Heart left ventricle (tissue), 16 donors: ENCODE measurements at regions of chr3 and their contacts with region 1.

Region 1: GRCh38 chr3:9439331-9439730 is 41.9 kb downstream of the SETD5 start:
- DNase-seq: no peak
- ATAC-seq: peak in 2 of 4 donors; percentile 48 to 54
- H3K4me3 ChIP-seq: no peak overlapping the region
- H3K27ac ChIP-seq: no peak overlapping the region
- H3K4me1 ChIP-seq: peaks cover 0 to 20% (median 1%) of the 10 kb centered on the region in 12 donors
- H3K27me3 ChIP-seq: no peaks in the 10 kb centered on the region
- CTCF ChIP-seq: no peak
- POLR2A ChIP-seq: no peak

Region 2: GRCh38 chr3:9373465-9373864 is 65.9 kb before region 1 on chr3:
- intact Hi-C with region 1: loop called in 1 of 10 experiments (anchors 5 kb)
- DNase-seq: no peak
- ATAC-seq: no peak
- H3K4me3 ChIP-seq: no peak overlapping the region
- H3K27ac ChIP-seq: no peak overlapping the region
- H3K4me1 ChIP-seq: peaks cover 0 to 5% (median 0%) of the 10 kb centered on the region in 12 donors
- H3K27me3 ChIP-seq: no peaks in the 10 kb centered on the region
- CTCF ChIP-seq: no peak
- POLR2A ChIP-seq: no peak

Region 3: GRCh38 chr3:9387322-9387655 is 52.0 kb before region 1 on chr3:
- intact Hi-C with region 1: loop called in 3 of 10 experiments (anchors 5 kb)
- DNase-seq: no peak
- ATAC-seq: no peak
- H3K4me3 ChIP-seq: no peak overlapping the region
- H3K27ac ChIP-seq: no peak overlapping the region
- H3K4me1 ChIP-seq: peaks cover 0 to 22% (median 11%) of the 10 kb centered on the region in 12 donors
- H3K27me3 ChIP-seq: no peaks in the 10 kb centered on the region
- CTCF ChIP-seq: no peak
- POLR2A ChIP-seq: no peak

Region 4: DNA sequence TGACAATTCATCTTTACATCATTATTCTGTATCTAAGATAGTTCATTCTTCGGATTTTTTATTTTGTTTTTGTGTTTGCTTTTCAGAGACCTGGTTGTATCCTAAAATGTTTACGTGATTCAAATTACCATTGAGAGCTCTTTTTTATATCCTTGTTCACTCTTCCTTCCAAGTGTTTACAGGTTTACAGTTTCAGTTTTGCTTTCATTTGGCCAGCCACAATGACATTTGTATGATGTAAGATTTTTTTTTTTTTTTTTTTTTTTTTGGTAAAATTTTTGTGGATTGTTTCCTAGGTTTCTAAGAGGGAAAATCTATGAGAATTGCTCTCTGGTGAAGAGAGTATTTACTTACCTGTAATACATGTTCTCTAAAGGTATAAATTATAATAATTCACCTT is 13.1 kb after region 1 on chr3:
- intact Hi-C with region 1: no loop called
- DNase-seq: no peak
- ATAC-seq: no peak
- H3K4me3 ChIP-seq: no peak overlapping the region
- H3K27ac ChIP-seq: peak overlapping the region in 1 of 12 donors; percentile 54
- H3K4me1 ChIP-seq: peaks cover 0 to 15% (median 0%) of the 10 kb centered on the region in 12 donors
- H3K27me3 ChIP-seq: no peaks in the 10 kb centered on the region
- CTCF ChIP-seq: no peak
- POLR2A ChIP-seq: no peak

Region 5: GRCh38 chr3:9503283-9503682 is 64.0 kb after region 1 on chr3:
- intact Hi-C with region 1: no loop called
- DNase-seq: peak; percentile 27 to 77 (median 46)
- ATAC-seq: peak in 2 of 4 donors; percentile 35 to 48
- H3K4me3 ChIP-seq: no peak overlapping the region
- H3K27ac ChIP-seq: no peak overlapping the region
- H3K4me1 ChIP-seq: peaks cover 0 to 13% (median 7%) of the 10 kb centered on the region in 12 donors
- H3K27me3 ChIP-seq: peaks cover 0 to 37% (median 15%) of the 10 kb centered on the region in 9 donors
- CTCF ChIP-seq: peak; percentile 80 to 89 (median 86)
- POLR2A ChIP-seq: no peak